OCI-LY7 (cell line): ENCODE measurements at regions of chr1 and their contacts with region 1.

Region 1: GRCh38 chr1:115469703-115470476 is 131.8 kb upstream of the NGF start:
- DNase-seq: peak; percentile 58
- H3K4me3 ChIP-seq: no peak overlapping the region
- H3K27ac ChIP-seq: no peak overlapping the region
- H3K4me1 ChIP-seq: peaks cover 8% of the 10 kb centered on the region
- CTCF ChIP-seq: peak; percentile 97

Region 2: GRCh38 chr1:115138968-115139367 is 330.9 kb before region 1 on chr1:
- CTCF ChIA-PET with region 1: interaction called, 10 read pairs
- POLR2A ChIA-PET with region 1: no interaction called
- intact Hi-C with region 1: loop called (anchors 1 kb)
- DNase-seq: peak; percentile 71
- H3K4me3 ChIP-seq: no peak overlapping the region
- H3K27ac ChIP-seq: no peak overlapping the region
- H3K4me1 ChIP-seq: no peaks in the 10 kb centered on the region
- CTCF ChIP-seq: peak; percentile 92